ENCODE measurements at regions of chr14 and their contacts with region 1.

Region 1: DNA sequence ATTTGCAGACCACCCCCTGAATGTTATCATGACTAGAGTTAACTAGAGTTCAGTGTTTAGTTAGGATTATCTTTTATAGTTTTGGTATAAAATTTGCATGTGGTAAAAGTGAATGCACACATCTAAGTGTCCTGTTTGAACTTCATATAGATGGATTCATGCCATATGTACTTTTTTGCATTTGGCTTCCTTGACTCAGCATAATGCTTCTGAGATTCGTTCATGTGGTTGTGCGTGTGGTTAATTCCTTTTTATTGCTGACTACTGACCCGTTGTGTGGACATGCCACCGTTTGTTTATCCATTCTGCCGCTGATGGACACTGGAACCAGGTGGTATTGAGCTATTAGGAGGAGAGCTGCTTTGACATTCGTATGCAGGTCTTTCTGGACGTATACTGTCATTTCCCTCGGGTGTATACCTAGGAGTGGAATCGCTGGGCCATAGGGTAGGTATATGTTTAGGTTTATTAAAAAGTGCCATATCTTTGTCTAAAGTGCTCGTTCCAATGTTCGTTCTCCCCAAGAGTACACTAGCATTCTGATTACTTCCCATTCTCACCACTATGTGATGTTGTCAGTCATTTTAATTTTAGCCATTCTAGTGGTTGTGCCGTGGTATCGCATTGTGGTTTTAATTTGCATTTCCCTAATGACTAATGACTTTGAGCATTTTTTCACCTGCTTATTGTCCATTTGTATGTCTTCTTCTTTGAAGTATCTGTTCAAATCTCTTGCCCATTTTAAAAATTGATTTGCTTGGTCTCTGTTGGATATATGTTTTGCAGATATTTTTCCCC is 37.7 kb downstream of the RIN3 start:
- DNase-seq: peak in 1 of 2 donors; percentile 72
- ATAC-seq: peak; percentile 39 to 72 (median 67)
- H3K4me3 ChIP-seq: no peak overlapping the region
- H3K4me3 Mint-ChIP-seq: peak overlapping the region; percentile 81
- H3K27ac ChIP-seq: no peak overlapping the region
- H3K27ac Mint-ChIP-seq: peak overlapping the region; percentile 82 to 84
- H3K4me1 ChIP-seq: peaks cover 74% of the 10 kb centered on the region
- H3K4me1 Mint-ChIP-seq: peaks cover 62 to 79% of the 10 kb centered on the region in 2 donors
- H3K27me3 ChIP-seq: no peaks in the 10 kb centered on the region
- H3K27me3 Mint-ChIP-seq: no peaks in the 10 kb centered on the region
- CTCF ChIP-seq: peak; percentile 43

Region 2: DNA sequence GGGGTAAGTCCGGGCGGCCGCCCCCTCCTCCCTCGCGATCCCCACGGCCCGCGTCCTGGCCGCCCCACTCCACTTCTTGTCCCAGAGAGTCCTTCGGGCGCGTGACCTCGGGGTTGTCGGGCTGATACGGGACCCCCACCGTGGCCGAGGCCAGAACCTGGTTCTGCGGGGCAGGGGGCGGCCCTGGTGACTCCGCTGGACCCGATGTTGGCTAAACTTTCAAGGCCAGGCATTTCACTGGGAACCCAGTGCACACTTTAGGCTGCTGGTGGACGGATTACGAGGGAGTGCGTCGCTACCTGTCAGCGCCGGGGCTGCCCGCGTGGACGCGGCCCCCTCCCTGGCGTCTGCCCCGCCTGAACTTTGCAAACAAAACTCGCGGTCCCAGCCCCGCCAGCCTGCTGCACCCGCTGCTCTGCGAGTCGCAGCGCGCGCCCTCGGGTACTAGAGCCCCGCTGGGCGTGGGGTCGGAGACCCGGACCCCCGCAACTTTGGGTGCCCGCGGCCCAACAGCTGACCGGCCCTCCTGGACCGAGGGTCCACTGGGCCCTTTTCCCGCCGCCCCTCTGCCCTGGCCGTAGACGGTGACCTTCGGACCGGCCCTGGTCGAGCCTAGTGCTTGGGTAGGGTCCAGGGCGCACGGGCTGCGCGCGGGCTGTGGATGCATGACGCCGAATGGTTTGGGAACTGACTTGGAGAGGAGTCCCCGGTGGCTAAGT is 37.1 kb before region 1 on chr14:
- intact Hi-C with region 1: loop called (anchors 2 kb)
- DNase-seq: peak; percentile 44 to 66
- ATAC-seq: peak; percentile 33 to 57 (median 37)
- H3K4me3 ChIP-seq: peak overlapping the region; percentile 92
- H3K4me3 Mint-ChIP-seq: peak overlapping the region; percentile 90
- H3K27ac ChIP-seq: peak overlapping the region; percentile 90
- H3K27ac Mint-ChIP-seq: peak overlapping the region; percentile 97 to 98
- H3K4me1 ChIP-seq: peaks cover 59% of the 10 kb centered on the region
- H3K4me1 Mint-ChIP-seq: peaks cover 49 to 63% of the 10 kb centered on the region in 2 donors
- H3K27me3 ChIP-seq: no peaks in the 10 kb centered on the region
- H3K27me3 Mint-ChIP-seq: no peaks in the 10 kb centered on the region
- CTCF ChIP-seq: no peak

Region 3: GRCh38 chr14:92568621-92569479 is 17.6 kb after region 1 on chr14:
- intact Hi-C with region 1: loop called (anchors 2 kb)
- DNase-seq: peak; percentile 69 to 82
- ATAC-seq: peak; percentile 83 to 94 (median 88)
- H3K4me3 ChIP-seq: no peak overlapping the region
- H3K4me3 Mint-ChIP-seq: peak overlapping the region; percentile 83
- H3K27ac ChIP-seq: peak overlapping the region; percentile 89
- H3K27ac Mint-ChIP-seq: peak overlapping the region; percentile 98
- H3K4me1 ChIP-seq: peaks cover 82% of the 10 kb centered on the region
- H3K4me1 Mint-ChIP-seq: peaks cover 65 to 76% of the 10 kb centered on the region in 2 donors
- H3K27me3 ChIP-seq: no peaks in the 10 kb centered on the region
- H3K27me3 Mint-ChIP-seq: no peaks in the 10 kb centered on the region
- CTCF ChIP-seq: no peak

Region 4: GRCh38 chr14:92603309-92604242 is 52.3 kb after region 1 on chr14:
- intact Hi-C with region 1: loop called (anchors 5 kb)
- DNase-seq: peak; percentile 49 to 83
- ATAC-seq: peak; percentile 69 to 76 (median 70)
- H3K4me3 ChIP-seq: no peak overlapping the region
- H3K4me3 Mint-ChIP-seq: peak overlapping the region; percentile 40
- H3K27ac ChIP-seq: peak overlapping the region; percentile 1
- H3K27ac Mint-ChIP-seq: peak overlapping the region; percentile 62 to 66
- H3K4me1 ChIP-seq: peaks cover 55% of the 10 kb centered on the region
- H3K4me1 Mint-ChIP-seq: peaks cover 43 to 67% of the 10 kb centered on the region in 2 donors
- H3K27me3 ChIP-seq: no peaks in the 10 kb centered on the region
- H3K27me3 Mint-ChIP-seq: no peaks in the 10 kb centered on the region
- CTCF ChIP-seq: peak; percentile 42

Region 5: GRCh38 chr14:92651106-92651757 is 100.0 kb after region 1 on chr14:
- intact Hi-C with region 1: loop called (anchors 1 kb)
- DNase-seq: peak; percentile 83 to 93
- ATAC-seq: peak; percentile 66 to 88 (median 77)
- H3K4me3 ChIP-seq: peak overlapping the region; percentile 72
- H3K4me3 Mint-ChIP-seq: peak overlapping the region; percentile 90
- H3K27ac ChIP-seq: peak overlapping the region; percentile 99
- H3K27ac Mint-ChIP-seq: peak overlapping the region; percentile 96 to 99
- H3K4me1 ChIP-seq: peaks cover 94% of the 10 kb centered on the region
- H3K4me1 Mint-ChIP-seq: peaks cover 75 to 95% of the 10 kb centered on the region in 2 donors
- H3K27me3 ChIP-seq: no peaks in the 10 kb centered on the region
- H3K27me3 Mint-ChIP-seq: no peaks in the 10 kb centered on the region
- CTCF ChIP-seq: no peak

Region 6: GRCh38 chr14:92673601-92674150 is 122.4 kb after region 1 on chr14:
- intact Hi-C with region 1: no loop called
- DNase-seq: no peak
- ATAC-seq: no peak
- H3K4me3 ChIP-seq: no peak overlapping the region
- H3K4me3 Mint-ChIP-seq: no peak overlapping the region
- H3K27ac ChIP-seq: no peak overlapping the region
- H3K27ac Mint-ChIP-seq: peak overlapping the region; percentile 82 to 96
- H3K4me1 ChIP-seq: peaks cover 61% of the 10 kb centered on the region
- H3K4me1 Mint-ChIP-seq: peaks cover 76 to 80% of the 10 kb centered on the region in 2 donors
- H3K27me3 ChIP-seq: no peaks in the 10 kb centered on the region
- H3K27me3 Mint-ChIP-seq: no peaks in the 10 kb centered on the region
- CTCF ChIP-seq: no peak

Region 7: GRCh38 chr14:92846162-92846897 is 295.1 kb after region 1 on chr14:
- intact Hi-C with region 1: no loop called
- DNase-seq: peak in 1 of 2 donors; percentile 27
- ATAC-seq: peak; percentile 81 to 87 (median 82)
- H3K4me3 ChIP-seq: no peak overlapping the region
- H3K4me3 Mint-ChIP-seq: no peak overlapping the region
- H3K27ac ChIP-seq: no peak overlapping the region
- H3K27ac Mint-ChIP-seq: peak overlapping the region in 1 of 2 donors; percentile 42
- H3K4me1 ChIP-seq: peaks cover 13% of the 10 kb centered on the region
- H3K4me1 Mint-ChIP-seq: peaks cover 17 to 19% of the 10 kb centered on the region in 2 donors
- H3K27me3 ChIP-seq: no peaks in the 10 kb centered on the region
- H3K27me3 Mint-ChIP-seq: no peaks in the 10 kb centered on the region
- CTCF ChIP-seq: no peak